Tibial artery (tissue), 4 donors: ENCODE measurements at regions of chr20 and their contacts with region 1.

Region 1: GRCh38 chr20:16801919-16802911 is 54.1 kb downstream of the OTOR start:
- DNase-seq: peak in 1 of 2 donors; percentile 52
- H3K4me3 ChIP-seq: no peak overlapping the region
- H3K27ac ChIP-seq: no peak overlapping the region
- H3K4me1 ChIP-seq: no peaks in the 10 kb centered on the region
- H3K27me3 ChIP-seq: peaks cover 0 to 7% of the 10 kb centered on the region in 2 donors
- CTCF ChIP-seq: peak; percentile 78 to 91

Region 2: DNA sequence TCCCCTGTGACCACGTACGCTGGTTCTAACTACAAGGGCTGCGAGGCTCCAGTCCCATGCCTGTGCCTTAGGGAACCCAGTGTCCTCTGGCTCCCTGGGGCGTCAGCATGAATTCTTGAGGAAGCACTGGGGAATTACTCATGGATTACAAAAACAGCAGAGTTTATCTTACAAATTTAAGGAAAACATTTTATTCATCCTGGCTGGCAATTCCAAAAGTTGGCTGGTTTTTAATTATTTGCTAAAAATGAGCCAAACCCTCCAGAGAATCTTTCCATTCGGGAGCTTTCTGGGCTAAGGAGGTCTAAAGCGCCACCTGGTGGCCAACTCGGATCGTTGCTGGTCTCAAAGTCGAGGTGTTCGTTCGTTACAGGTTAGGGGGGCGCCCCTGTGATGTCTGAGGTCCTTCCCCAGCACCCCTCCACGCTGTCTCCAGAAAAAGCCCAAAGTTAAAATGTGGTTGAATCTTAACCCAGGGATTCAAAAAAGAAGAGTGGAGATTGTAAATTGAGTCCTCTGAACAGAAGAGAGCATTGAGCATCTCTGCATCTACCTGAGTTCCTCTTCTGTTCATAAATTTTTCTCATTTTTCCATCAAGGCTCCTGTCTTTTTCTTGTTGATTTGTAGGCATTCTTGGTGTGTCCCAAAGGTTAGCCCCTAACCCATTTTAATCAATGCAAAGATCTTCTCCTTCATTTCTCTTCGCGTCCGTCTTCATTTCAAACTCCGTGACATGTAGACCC is 629.6 kb after region 1 on chr20:
- intact Hi-C with region 1: loop called (anchors 2 kb)
- DNase-seq: no peak
- H3K4me3 ChIP-seq: no peak overlapping the region
- H3K27ac ChIP-seq: no peak overlapping the region
- H3K4me1 ChIP-seq: peaks cover 0 to 11% (median 4%) of the 10 kb centered on the region in 4 donors
- H3K27me3 ChIP-seq: peaks cover 0 to 25% of the 10 kb centered on the region in 2 donors
- CTCF ChIP-seq: peak; percentile 74 to 84